Posterior cingulate gyrus (tissue), 11 donors: ENCODE measurements at regions of chr1 and their contacts with region 1.

Region 1: DNA sequence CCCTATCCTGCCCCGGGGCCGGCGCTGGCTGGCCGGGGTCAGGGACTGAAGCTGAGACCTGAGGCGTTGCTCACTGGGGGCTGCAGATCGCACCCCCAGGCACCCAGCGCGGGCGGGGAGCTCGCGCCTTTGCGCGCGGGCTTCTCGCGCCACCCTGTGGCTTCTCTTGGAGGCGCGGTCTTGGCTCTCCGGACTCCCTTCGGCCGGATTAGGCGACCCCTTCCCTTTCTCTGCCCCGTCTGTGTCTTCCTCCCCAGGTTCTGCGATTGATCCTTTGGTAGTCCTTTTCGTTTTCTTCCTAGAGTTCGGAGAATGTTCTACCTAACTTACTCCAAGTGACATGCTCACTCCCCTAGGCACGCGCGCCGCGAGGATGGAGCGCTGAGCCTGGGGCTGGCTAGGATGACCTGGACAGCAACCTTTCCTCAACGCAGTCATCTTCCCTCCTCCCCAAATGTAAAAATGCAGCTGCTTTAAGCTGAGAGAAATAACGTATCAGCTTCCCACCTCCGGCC is 495 bp upstream of the NTRK1 start:
- DNase-seq: peak in 7 of 10 donors; percentile 34 to 93 (median 50)

Region 2: GRCh38 chr1:156767879-156768604 is 92.1 kb before region 1 on chr1:
- intact Hi-C with region 1: no loop called
- DNase-seq: peak in 4 of 10 donors; percentile 16 to 87 (median 80)

Region 3: DNA sequence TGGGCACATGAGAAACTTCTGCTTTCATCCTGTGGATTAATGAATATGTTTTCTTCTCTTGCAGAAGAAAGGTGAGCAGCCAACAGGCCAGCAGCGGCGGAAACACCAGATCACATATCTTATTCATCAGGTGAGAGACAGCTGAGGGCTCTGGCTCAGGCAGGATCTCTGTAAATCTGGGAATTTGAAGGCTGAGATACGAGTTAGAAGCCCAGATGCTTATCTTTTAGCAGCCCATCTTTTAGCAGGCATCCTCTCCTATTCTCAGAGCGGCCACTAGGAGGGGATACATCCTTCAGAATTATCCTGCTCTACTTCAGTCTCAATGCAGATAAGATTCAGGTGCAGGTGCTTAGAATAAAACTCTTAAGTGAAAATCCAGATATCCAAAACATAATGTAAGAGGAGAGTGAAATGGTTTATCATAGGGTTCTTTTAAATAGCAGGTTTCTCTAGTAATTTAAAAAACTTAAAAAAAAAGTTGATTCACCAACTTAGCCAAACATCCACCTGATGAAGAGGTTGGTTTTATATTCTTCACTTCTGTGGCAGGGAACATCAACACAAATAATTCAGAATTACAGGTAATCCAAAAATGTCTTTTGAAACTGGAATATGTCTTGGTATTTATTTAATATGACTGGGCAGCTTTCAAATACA is 62.8 kb before region 1 on chr1:
- intact Hi-C with region 1: loop called (anchors 5 kb)
- DNase-seq: peak in 4 of 10 donors; percentile 33 to 46 (median 36)

Region 4: DNA sequence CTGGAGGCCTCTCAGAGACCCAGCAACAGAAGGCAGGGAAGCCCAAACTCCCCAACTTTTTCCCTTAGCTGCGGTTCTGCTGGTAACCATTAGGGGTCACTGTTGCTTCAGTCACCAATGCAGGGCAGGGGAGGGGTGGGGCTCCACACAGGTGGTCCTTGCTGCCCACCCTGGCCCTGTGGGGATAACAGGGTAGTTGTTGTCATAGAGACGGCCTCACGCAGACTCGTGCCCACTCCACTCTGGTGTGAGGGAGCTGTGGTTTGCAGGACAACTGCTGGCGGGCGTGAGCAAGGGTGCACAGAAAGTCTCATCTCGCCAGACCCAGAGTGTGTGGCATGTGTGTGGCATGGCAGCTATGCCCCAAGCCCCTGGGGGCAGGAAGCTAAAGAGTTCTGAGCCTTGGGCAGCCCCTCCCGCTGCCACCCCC is 21.2 kb before region 1 on chr1:
- intact Hi-C with region 1: loop called (anchors 2 kb)
- DNase-seq: peak in 2 of 10 donors; percentile 31 to 50

Region 5: DNA sequence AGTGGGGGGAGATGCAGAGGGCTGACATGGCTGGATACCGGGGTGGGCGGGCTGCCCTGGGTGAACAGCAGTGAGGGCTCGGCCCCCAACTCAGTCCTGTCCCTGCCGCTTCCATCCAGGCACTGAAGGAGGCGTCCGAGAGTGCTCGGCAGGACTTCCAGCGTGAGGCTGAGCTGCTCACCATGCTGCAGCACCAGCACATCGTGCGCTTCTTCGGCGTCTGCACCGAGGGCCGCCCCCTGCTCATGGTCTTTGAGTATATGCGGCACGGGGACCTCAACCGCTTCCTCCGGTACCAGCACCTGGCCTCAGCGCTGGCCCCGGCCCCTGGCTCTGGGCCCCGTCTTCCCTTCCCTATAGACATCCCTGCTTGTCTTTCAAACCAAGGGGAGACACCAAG is 16.1 kb after region 1 on chr1:
- intact Hi-C with region 1: no loop called
- DNase-seq: no peak